ENCODE measurements at regions of chr4 and their contacts with region 1.

Region 1: GRCh38 chr4:168076989-168077725 is 15.2 kb upstream of the ANXA10 start:
- DNase-seq: peak; percentile 74
- H3K4me3 Mint-ChIP-seq: no peak overlapping the region
- H3K27ac Mint-ChIP-seq: no peak overlapping the region
- H3K4me1 Mint-ChIP-seq: peaks cover 8% of the 10 kb centered on the region
- H3K27me3 Mint-ChIP-seq: no peaks in the 10 kb centered on the region
- CTCF ChIP-seq: peak; percentile 43

Region 2: DNA sequence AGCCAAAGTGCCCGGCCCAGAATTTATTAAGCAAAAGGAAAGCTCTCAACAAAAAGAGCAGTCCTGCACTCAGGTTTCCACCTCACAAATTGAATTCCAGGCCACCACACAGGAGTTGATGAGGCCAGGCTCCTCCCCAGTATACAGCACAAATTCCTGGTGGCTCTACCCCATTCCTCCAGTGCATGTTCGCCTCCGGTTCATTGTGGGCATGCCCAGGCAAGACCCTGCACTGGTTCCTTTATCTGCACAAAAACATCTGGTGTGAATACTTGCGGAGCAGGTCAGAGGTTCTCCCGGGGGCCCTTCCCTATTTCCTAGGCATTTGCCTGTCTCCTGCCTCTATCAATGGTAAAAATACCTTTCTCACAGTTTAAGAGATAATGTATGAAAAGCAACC is 180.0 kb before region 1 on chr4:
- CTCF ChIA-PET with region 1: no interaction called
- intact Hi-C with region 1: loop called (anchors 10 kb)
- DNase-seq: peak; percentile 43
- H3K4me3 Mint-ChIP-seq: peak overlapping the region; percentile 50
- H3K27ac Mint-ChIP-seq: peak overlapping the region; percentile 70
- H3K4me1 Mint-ChIP-seq: peaks cover 36% of the 10 kb centered on the region
- H3K27me3 Mint-ChIP-seq: no peaks in the 10 kb centered on the region
- CTCF ChIP-seq: no peak

Region 3: GRCh38 chr4:167989815-167990214 is 87.3 kb before region 1 on chr4:
- CTCF ChIA-PET with region 1: no interaction called
- intact Hi-C with region 1: loop called (anchors 1 kb)
- DNase-seq: no peak
- H3K4me3 Mint-ChIP-seq: no peak overlapping the region
- H3K27ac Mint-ChIP-seq: no peak overlapping the region
- H3K4me1 Mint-ChIP-seq: no peaks in the 10 kb centered on the region
- H3K27me3 Mint-ChIP-seq: no peaks in the 10 kb centered on the region
- CTCF ChIP-seq: no peak

Region 4: DNA sequence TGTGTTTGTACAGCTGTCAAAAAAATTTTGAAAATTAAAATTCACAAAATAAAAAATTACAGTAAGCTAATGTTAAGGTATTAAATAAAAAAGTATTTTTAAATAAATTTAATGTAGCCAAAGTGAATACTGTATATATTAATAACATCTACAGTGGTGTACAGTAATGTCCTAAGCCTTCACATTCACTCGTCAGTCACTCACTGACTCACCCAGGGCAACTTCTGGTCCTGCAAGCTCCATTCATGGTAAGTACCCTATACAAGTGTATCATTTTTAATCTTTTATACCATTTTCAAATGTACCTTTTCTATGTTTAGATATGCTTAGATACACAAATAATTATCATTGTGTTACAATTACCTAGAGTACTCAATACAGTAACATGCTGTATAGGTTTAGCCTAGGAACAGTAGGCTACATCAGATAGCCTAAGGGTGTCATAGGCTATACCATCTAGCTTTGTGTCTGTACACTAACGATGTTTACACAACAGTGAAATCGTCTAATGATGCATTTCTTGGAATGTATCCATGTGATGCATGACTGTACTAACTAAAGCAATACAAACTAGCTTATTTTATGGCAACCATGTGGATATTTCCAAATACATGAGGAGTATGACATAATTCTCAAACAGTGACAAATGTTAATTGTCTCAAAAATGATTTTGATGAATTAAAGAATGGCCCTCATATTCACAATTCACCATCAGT is 227.7 kb after region 1 on chr4:
- CTCF ChIA-PET with region 1: no interaction called
- intact Hi-C with region 1: no loop called
- DNase-seq: no peak
- H3K4me3 Mint-ChIP-seq: no peak overlapping the region
- H3K27ac Mint-ChIP-seq: no peak overlapping the region
- H3K4me1 Mint-ChIP-seq: no peaks in the 10 kb centered on the region
- H3K27me3 Mint-ChIP-seq: no peaks in the 10 kb centered on the region
- CTCF ChIP-seq: no peak